Heart left ventricle (tissue), 16 donors: ENCODE measurements at regions of chr12 and their contacts with region 1.

Region 1: GRCh38 chr12:57621497-57622292 is 10.5 kb downstream of the ARHGEF25 start:
- DNase-seq: peak in 4 of 5 donors; percentile 56 to 79 (median 73)
- ATAC-seq: peak; percentile 65 to 75 (median 70)
- H3K4me3 ChIP-seq: peak overlapping the region; percentile 20 to 66 (median 47)
- H3K27ac ChIP-seq: no peak overlapping the region
- H3K4me1 ChIP-seq: peaks cover 0 to 42% (median 17%) of the 10 kb centered on the region in 12 donors
- H3K27me3 ChIP-seq: peaks cover 6 to 72% (median 31%) of the 10 kb centered on the region in 9 donors
- CTCF ChIP-seq: peak; percentile 87 to 98 (median 94)
- POLR2A ChIP-seq: no peak

Region 2: GRCh38 chr12:57462251-57462911 is 159.3 kb before region 1 on chr12:
- intact Hi-C with region 1: loop called in 4 of 10 experiments (anchors 10 kb)
- DNase-seq: peak; percentile 85 to 91 (median 85)
- ATAC-seq: peak; percentile 68 to 77 (median 74)
- H3K4me3 ChIP-seq: peak overlapping the region; percentile 53 to 82 (median 68)
- H3K27ac ChIP-seq: peak overlapping the region; percentile 37 to 86 (median 72)
- H3K4me1 ChIP-seq: peaks cover 0 to 41% (median 21%) of the 10 kb centered on the region in 12 donors
- H3K27me3 ChIP-seq: peaks cover 0 to 9% (median 0%) of the 10 kb centered on the region in 9 donors
- CTCF ChIP-seq: peak; percentile 89 to 99 (median 94)
- POLR2A ChIP-seq: peak in 1 of 2 donors; percentile 22

Region 3: DNA sequence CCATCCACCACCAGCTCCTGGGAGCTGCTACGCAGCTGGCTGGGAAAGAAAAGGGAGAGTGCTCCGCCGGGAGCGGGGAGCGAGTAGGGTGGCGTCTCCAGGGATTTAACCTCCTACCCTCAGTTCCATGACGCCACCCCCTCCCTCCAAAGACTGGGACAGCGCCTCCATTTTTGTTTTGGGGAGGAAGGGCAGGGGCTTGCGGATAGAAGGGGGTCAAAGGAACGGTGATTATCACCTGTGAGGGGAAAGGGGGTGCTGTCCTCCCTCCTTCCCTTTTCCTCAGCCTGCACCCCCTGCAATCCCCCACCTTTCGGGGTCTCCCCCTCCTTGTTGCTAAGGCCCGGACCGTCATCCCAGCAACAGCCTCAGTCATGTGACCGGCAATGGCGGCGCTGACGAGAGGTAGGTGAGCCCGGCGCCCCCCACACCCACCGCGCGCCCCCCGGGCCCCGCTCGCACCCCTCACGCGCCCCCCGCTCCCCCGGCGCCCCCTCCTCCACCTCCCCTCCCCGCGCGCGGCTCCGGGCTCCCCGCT is 17.2 kb before region 1 on chr12 and contains the start of gene DTX3:
- intact Hi-C with region 1: loop called in 1 of 10 experiments (anchors 2 kb)
- DNase-seq: peak; percentile 54 to 67 (median 55)
- ATAC-seq: peak; percentile 50 to 61 (median 58)
- H3K4me3 ChIP-seq: peak within 1 kb of the TSS; percentile 67 to 96 (median 77)
- H3K27ac ChIP-seq: peak within 1 kb of the TSS; percentile 76 to 98 (median 91)
- H3K4me1 ChIP-seq: peaks cover 0 to 45% (median 17%) of the 10 kb centered on the region in 12 donors
- H3K27me3 ChIP-seq: no peaks in the 10 kb centered on the region
- CTCF ChIP-seq: no peak
- POLR2A ChIP-seq: no peak
- total RNA-seq, gene DTX3: 15.6 to 30.7 (median 22.4) TPM

Region 4: DNA sequence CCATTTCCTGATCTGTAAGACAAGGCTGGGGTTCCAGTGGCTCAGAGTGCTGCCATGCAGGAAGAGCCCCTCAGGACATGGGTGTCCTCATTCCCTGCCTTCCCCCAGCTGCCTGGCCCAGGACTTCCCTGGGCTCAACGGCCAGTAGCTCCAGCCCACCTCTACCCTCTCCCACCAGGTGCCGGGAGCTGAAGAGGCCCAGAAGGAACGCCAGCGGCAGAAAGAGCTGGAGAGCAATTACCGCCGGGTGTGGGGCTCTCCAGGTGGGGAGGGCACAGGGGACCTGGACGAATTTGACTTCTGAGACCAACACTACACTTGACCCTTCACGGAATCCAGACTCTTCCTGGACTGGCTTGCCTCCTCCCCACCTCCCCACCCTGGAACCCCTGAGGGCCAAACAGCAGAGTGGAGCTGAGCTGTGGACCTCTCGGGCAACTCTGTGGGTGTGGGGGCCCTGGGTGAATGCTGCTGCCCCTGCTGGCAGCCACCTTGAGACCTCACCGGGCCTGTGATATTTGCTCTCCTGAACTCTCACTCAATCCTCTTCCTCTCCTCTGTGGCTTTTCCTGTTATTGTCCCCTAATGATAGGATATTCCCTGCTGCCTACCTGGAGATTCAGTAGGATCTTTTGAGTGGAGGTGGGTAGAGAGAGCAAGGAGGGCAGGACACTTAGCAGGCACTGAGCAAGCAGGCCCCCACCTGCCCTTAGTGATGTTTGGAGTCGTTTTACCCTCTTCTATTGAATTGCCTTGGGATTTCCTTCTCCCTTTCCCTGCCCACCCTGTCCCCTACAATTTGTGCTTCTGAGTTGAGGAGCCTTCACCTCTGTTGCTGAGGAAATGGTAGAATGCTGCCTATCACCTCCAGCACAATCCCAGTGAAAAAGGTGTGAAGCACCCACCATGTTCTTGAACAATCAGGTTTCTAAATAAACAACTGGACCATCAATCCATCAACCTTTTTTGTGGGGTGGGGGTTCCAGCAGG is 99.2 kb after region 1 on chr12:
- intact Hi-C with region 1: no loop called
- DNase-seq: peak in 1 of 5 donors; percentile 3
- ATAC-seq: no peak
- H3K4me3 ChIP-seq: no peak overlapping the region
- H3K27ac ChIP-seq: no peak overlapping the region
- H3K4me1 ChIP-seq: peaks cover 0 to 7% (median under 1%) of the 10 kb centered on the region in 12 donors
- H3K27me3 ChIP-seq: peaks cover 0 to 15% (median 0%) of the 10 kb centered on the region in 9 donors
- CTCF ChIP-seq: no peak
- POLR2A ChIP-seq: no peak